ENCODE measurements at regions of chr6 and their contacts with region 1.

Region 1: GRCh38 chr6:36615018-36615761 is 21.0 kb downstream of the SRSF3 start:
- DNase-seq: peak; percentile 79 to 82 (median 82)
- H3K4me3 ChIP-seq: no peak overlapping the region
- H3K4me3 Mint-ChIP-seq: no peak overlapping the region
- H3K27ac ChIP-seq: no peak overlapping the region
- H3K27ac Mint-ChIP-seq: peak overlapping the region; percentile 28 to 83 (median 71)
- H3K4me1 ChIP-seq: peaks cover 24 to 38% of the 10 kb centered on the region in 2 donors
- H3K4me1 Mint-ChIP-seq: peaks cover 33% of the 10 kb centered on the region
- H3K27me3 ChIP-seq: no peaks in the 10 kb centered on the region
- H3K27me3 Mint-ChIP-seq: no peaks in the 10 kb centered on the region
- CTCF ChIP-seq: peak; percentile 84

Region 2: DNA sequence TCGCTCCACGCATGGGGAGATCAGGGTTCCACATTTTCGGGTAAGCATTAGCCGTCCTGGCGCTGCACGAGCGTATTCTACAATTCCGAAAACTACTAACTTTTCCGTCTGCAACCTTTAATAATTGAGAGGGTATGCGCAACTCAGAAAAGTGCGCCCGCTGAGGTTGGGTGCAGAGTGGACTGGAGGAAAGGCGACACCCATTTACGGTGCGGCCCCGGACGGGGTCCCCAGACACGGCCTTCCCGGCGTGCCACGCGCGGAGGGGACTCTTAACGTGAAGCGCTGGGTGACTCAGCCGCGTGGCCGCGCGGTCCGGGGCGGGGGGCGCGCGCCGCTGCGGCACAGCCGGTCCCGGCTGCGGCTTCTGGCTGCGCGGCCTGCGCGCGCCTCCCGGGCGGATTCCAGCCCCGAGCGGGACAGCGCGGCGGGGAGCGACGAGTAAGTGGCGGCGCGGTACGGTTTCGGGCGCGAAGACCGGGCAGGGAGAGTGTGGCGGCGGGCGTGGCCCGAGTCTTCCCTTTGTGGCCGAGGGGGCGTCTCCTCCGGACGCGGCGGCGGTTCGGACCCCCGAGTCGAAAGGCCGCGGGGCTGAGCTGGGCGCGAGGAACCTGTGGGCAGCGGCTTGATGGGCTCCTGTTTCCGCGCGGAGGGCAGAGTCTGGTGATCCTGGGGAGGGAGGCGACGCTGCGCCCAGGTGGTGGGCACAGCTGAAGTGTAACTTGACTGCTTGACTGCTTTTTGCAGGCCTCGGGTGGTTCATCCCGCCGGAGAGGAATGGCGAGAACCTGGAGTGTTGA is 172.3 kb before region 1 on chr6 and contains the starts of genes KCTD20 and PXT1:
- intact Hi-C with region 1: no loop called
- DNase-seq: peak; percentile 80 to 88 (median 84)
- H3K4me3 ChIP-seq: peak within 1 kb of the TSS; percentile 81 to 98 (median 97)
- H3K4me3 Mint-ChIP-seq: peak within 1 kb of the TSS; percentile 98 to 100
- H3K27ac ChIP-seq: peak within 1 kb of the TSS; percentile 91 to 99
- H3K27ac Mint-ChIP-seq: peak within 1 kb of the TSS; percentile 98 to 100 (median 99)
- H3K4me1 ChIP-seq: peaks cover 36 to 40% of the 10 kb centered on the region in 2 donors
- H3K4me1 Mint-ChIP-seq: peaks cover 44% of the 10 kb centered on the region
- H3K27me3 ChIP-seq: no peaks in the 10 kb centered on the region
- H3K27me3 Mint-ChIP-seq: no peaks in the 10 kb centered on the region
- CTCF ChIP-seq: no peak
- polyA plus RNA-seq, gene KCTD20: 23.7 to 79.7 (median 73.9) TPM
- polyA plus RNA-seq, gene PXT1: 0.13 to 0.31 (median 0.24) TPM

Region 3: GRCh38 chr6:36586606-36587005 is 28.6 kb before region 1 on chr6:
- intact Hi-C with region 1: no loop called
- DNase-seq: no peak
- H3K4me3 ChIP-seq: no peak overlapping the region
- H3K4me3 Mint-ChIP-seq: no peak overlapping the region
- H3K27ac ChIP-seq: no peak overlapping the region
- H3K27ac Mint-ChIP-seq: no peak overlapping the region
- H3K4me1 ChIP-seq: no peaks in the 10 kb centered on the region
- H3K4me1 Mint-ChIP-seq: peaks cover 3% of the 10 kb centered on the region
- H3K27me3 ChIP-seq: no peaks in the 10 kb centered on the region
- H3K27me3 Mint-ChIP-seq: peaks cover 0 to 4% (median 4%) of the 10 kb centered on the region in 3 donors
- CTCF ChIP-seq: no peak

Region 4: GRCh38 chr6:36650848-36651478 is 35.8 kb after region 1 on chr6:
- intact Hi-C with region 1: loop called in 1 of 2 experiments (anchors 5 kb)
- DNase-seq: peak; percentile 60 to 86 (median 78)
- H3K4me3 ChIP-seq: peak overlapping the region in 1 of 3 experiments; percentile 35
- H3K4me3 Mint-ChIP-seq: peak overlapping the region in 1 of 2 donors; percentile 11
- H3K27ac ChIP-seq: peak overlapping the region; percentile 46 to 66
- H3K27ac Mint-ChIP-seq: peak overlapping the region; percentile 67 to 88 (median 83)
- H3K4me1 ChIP-seq: peaks cover 32 to 35% of the 10 kb centered on the region in 2 donors
- H3K4me1 Mint-ChIP-seq: peaks cover 35% of the 10 kb centered on the region
- H3K27me3 ChIP-seq: no peaks in the 10 kb centered on the region
- H3K27me3 Mint-ChIP-seq: peaks cover 0 to 8% (median 1%) of the 10 kb centered on the region in 3 donors
- CTCF ChIP-seq: no peak

Region 5: DNA sequence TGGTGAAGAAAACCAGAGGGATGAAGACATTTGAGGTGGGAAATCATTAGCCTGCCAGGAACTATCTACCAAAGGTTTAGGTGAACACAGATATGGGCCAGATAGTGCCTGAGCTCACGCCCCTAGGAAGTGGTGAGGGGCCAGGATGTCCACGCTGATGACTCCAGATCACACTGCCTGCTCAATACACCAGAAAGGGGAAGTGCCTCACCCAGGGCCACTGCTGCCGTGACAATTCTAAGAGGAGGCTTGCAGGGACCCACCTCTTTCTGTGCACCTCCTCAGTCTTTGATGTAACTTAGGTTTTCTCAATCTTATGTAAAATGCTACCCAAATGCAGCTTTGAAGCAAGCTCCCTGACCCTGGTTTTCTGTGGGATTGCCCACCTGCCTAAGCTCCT is 77.0 kb after region 1 on chr6:
- intact Hi-C with region 1: no loop called
- DNase-seq: peak; percentile 86 to 88 (median 88)
- H3K4me3 ChIP-seq: no peak overlapping the region
- H3K4me3 Mint-ChIP-seq: peak overlapping the region; percentile 30 to 31
- H3K27ac ChIP-seq: peak overlapping the region; percentile 24 to 81
- H3K27ac Mint-ChIP-seq: peak overlapping the region; percentile 70 to 91 (median 88)
- H3K4me1 ChIP-seq: peaks cover 27 to 35% of the 10 kb centered on the region in 2 donors
- H3K4me1 Mint-ChIP-seq: peaks cover 37% of the 10 kb centered on the region
- H3K27me3 ChIP-seq: no peaks in the 10 kb centered on the region
- H3K27me3 Mint-ChIP-seq: peaks cover 0 to 2% (median 0%) of the 10 kb centered on the region in 3 donors
- CTCF ChIP-seq: no peak

Region 6: GRCh38 chr6:37257634-37258404 is 642.6 kb after region 1 on chr6 and contains the starts of genes TBC1D22B and TMEM217:
- intact Hi-C with region 1: no loop called
- DNase-seq: peak; percentile 85 to 94 (median 94)
- H3K4me3 ChIP-seq: peak within 1 kb of the TSS; percentile 51 to 90 (median 68)
- H3K4me3 Mint-ChIP-seq: peak within 1 kb of the TSS; percentile 92 to 95
- H3K27ac ChIP-seq: peak within 1 kb of the TSS; percentile 59 to 92
- H3K27ac Mint-ChIP-seq: peak within 1 kb of the TSS; percentile 89 to 97 (median 96)
- H3K4me1 ChIP-seq: peaks cover 26 to 33% of the 10 kb centered on the region in 2 donors
- H3K4me1 Mint-ChIP-seq: peaks cover 43% of the 10 kb centered on the region
- H3K27me3 ChIP-seq: no peaks in the 10 kb centered on the region
- H3K27me3 Mint-ChIP-seq: peaks cover 0 to 3% (median 1%) of the 10 kb centered on the region in 3 donors
- CTCF ChIP-seq: no peak
- polyA plus RNA-seq, gene TBC1D22B: 3.9 to 5.0 (median 4.9) TPM
- polyA plus RNA-seq, gene TMEM217: 0.09 to 0.29 TPM in 2 of 3 donors, not detected in the other